ENCODE measurements at regions of chr22 and their contacts with region 1.

Region 1: GRCh38 chr22:32331236-32331917 is 26.3 kb upstream of the RFPL3 start:
- DNase-seq: peak in 1 of 2 donors; percentile 31
- H3K4me3 ChIP-seq: peak overlapping the region in 1 of 3 donors; percentile 25
- H3K27ac ChIP-seq: no peak overlapping the region
- H3K4me1 ChIP-seq: no peaks in the 10 kb centered on the region
- H3K27me3 ChIP-seq: peaks cover 0 to 7% of the 10 kb centered on the region in 2 donors
- CTCF ChIP-seq: no peak
- POLR2A ChIP-seq: no peak

Region 2: DNA sequence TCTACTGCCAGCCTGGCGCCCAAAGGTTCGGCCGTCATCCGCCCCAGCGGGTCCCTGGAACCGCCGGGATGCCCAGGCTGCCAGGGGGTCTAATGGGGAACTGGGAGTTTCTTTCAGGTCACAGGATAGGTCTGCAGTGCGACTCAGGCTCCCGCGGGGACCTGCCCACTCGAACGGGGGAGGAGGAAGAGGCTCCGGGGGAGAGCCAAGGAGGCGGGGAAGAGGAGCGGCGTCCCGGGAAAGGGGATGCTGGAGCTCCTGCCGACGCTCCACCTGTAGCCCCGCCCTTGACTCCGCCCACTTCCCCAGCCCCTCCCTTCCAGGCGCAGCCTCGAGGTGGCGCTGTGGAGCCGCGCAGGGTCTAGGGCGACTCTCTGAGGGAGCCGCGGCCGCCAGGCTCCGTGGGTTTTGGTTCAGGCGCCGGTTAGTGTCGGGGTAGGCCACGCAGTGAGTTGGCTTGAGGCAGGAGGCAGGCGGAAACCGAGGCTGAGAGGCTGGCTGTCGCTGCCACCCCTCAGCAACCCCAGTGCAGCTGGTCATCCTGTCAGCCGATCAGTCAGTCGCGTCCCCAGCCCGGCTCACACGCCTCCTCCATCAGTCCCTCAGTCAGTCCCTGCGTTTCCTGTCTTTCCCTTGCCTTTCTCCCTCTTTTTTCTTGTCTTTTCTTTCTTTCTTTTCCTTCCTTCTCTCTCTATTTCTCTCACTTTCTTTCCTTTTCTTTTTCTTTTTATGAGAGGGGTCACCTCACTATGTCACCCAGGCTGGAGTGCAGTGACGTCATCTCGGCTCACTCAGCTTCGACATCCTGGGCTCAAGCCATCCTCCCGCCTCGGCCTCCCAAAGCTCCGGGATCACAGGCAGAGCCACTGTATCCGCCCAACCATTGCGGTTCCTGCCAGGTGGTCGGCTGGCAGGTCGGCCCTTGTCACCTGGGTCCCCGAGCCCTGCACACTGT is 360.6 kb before region 1 on chr22:
- intact Hi-C with region 1: no loop called
- DNase-seq: peak; percentile 77 to 81
- H3K4me3 ChIP-seq: peak overlapping the region; percentile 28 to 72 (median 47)
- H3K27ac ChIP-seq: peak overlapping the region in 1 of 2 donors; percentile 52
- H3K4me1 ChIP-seq: peaks cover 0 to 3% of the 10 kb centered on the region in 2 donors
- H3K27me3 ChIP-seq: no peaks in the 10 kb centered on the region
- CTCF ChIP-seq: peak; percentile 67 to 87 (median 81)
- POLR2A ChIP-seq: no peak

Region 3: GRCh38 chr22:33747576-33748180 is 1416.3 kb after region 1 on chr22:
- intact Hi-C with region 1: loop called (anchors 5 kb)
- DNase-seq: no peak
- H3K4me3 ChIP-seq: no peak overlapping the region
- H3K27ac ChIP-seq: no peak overlapping the region
- H3K4me1 ChIP-seq: no peaks in the 10 kb centered on the region
- H3K27me3 ChIP-seq: no peaks in the 10 kb centered on the region
- CTCF ChIP-seq: no peak
- POLR2A ChIP-seq: no peak